Tibial artery (tissue), 4 donors: ENCODE measurements at regions of chr5 and their contacts with region 1.

Region 1: GRCh38 chr5:14871210-14872069 is at the start of gene ANKH:
- DNase-seq: peak; percentile 69 to 89
- H3K4me3 ChIP-seq: peak within 1 kb of the TSS; percentile 78 to 99
- H3K27ac ChIP-seq: peak within 1 kb of the TSS; percentile 96 to 98
- H3K4me1 ChIP-seq: peaks cover 0 to 27% (median 10%) of the 10 kb centered on the region in 4 donors
- H3K27me3 ChIP-seq: no peaks in the 10 kb centered on the region
- CTCF ChIP-seq: peak in 1 of 2 experiments; percentile 57

Region 2: GRCh38 chr5:14727428-14727865 is 144.0 kb before region 1 on chr5:
- intact Hi-C with region 1: loop called (anchors 5 kb)
- DNase-seq: peak; percentile 54 to 85
- H3K4me3 ChIP-seq: no peak overlapping the region
- H3K27ac ChIP-seq: peak overlapping the region; percentile 32 to 60
- H3K4me1 ChIP-seq: peaks cover 0 to 26% (median 22%) of the 10 kb centered on the region in 4 donors
- H3K27me3 ChIP-seq: no peaks in the 10 kb centered on the region
- CTCF ChIP-seq: peak; percentile 91 to 95

Region 3: DNA sequence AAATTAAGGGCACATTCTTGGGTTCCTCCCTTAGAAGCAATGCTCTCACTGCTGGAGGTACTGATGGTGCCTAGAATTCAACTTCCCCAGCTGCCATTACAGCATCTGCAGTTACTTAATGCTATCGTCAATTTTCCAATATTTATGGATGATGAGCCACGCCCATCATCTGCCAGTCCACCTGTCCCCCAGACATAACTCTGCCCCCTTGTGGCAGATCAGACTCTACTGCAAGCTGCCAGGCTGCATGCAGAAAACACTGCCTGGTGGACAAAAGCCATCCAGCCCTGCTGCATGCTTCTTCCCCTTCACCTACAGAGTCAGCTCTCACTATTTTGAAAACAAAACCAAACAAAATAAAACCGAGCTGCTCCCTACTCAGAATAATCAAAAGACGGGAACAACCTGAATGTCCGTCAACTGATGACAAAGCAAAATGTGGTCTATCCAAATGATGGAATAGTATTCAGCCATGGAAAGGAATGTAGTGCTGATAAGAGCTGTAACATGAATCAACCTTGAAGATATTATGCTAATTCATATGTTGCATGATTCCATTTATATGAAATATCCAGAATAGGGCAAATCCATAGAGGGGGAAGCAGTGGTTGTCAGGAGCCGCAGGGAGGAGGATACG is 1679.0 kb after region 1 on chr5:
- intact Hi-C with region 1: no loop called
- DNase-seq: no peak
- H3K4me3 ChIP-seq: no peak overlapping the region
- H3K27ac ChIP-seq: no peak overlapping the region
- H3K4me1 ChIP-seq: peaks cover 0 to 5% (median 0%) of the 10 kb centered on the region in 4 donors
- H3K27me3 ChIP-seq: no peaks in the 10 kb centered on the region
- CTCF ChIP-seq: peak in 1 of 2 experiments; percentile 36